CD4-positive, alpha-beta memory T cell (primary cell): ENCODE measurements at regions of chr13 and their contacts with region 1.

Region 1: GRCh38 chr13:99366075-99366987 is 59.1 kb upstream of the GPR183 start:
- DNase-seq: no peak
- H3K4me3 ChIP-seq: peak overlapping the region in 1 of 2 donors; percentile 22
- H3K4me3 Mint-ChIP-seq: peak overlapping the region; percentile 41 to 93 (median 78)
- H3K27ac ChIP-seq: peak overlapping the region; percentile 70
- H3K27ac Mint-ChIP-seq: peak overlapping the region; percentile 96 to 98 (median 97)
- H3K4me1 ChIP-seq: peaks cover 98% of the 10 kb centered on the region
- H3K4me1 Mint-ChIP-seq: peaks cover 73 to 98% (median 85%) of the 10 kb centered on the region in 4 donors
- H3K27me3 ChIP-seq: no peaks in the 10 kb centered on the region
- H3K27me3 Mint-ChIP-seq: no peaks in the 10 kb centered on the region

Region 2: GRCh38 chr13:99275093-99275469 is 91.2 kb before region 1 on chr13:
- CTCF ChIA-PET with region 1: interaction called, 67 read pairs
- POLR2A ChIA-PET with region 1: interaction called, 23 read pairs
- intact Hi-C with region 1: no loop called
- DNase-seq: peak; percentile 46 to 67 (median 54)
- H3K4me3 ChIP-seq: peak overlapping the region in 1 of 2 donors; percentile 3
- H3K4me3 Mint-ChIP-seq: peak overlapping the region in 7 of 8 donors; percentile 43 to 86 (median 74)
- H3K27ac ChIP-seq: peak overlapping the region; percentile 11
- H3K27ac Mint-ChIP-seq: peak overlapping the region; percentile 80 to 98 (median 94)
- H3K4me1 ChIP-seq: peaks cover 93% of the 10 kb centered on the region
- H3K4me1 Mint-ChIP-seq: peaks cover 79 to 99% (median 89%) of the 10 kb centered on the region in 4 donors
- H3K27me3 ChIP-seq: no peaks in the 10 kb centered on the region
- H3K27me3 Mint-ChIP-seq: no peaks in the 10 kb centered on the region

Region 3: DNA sequence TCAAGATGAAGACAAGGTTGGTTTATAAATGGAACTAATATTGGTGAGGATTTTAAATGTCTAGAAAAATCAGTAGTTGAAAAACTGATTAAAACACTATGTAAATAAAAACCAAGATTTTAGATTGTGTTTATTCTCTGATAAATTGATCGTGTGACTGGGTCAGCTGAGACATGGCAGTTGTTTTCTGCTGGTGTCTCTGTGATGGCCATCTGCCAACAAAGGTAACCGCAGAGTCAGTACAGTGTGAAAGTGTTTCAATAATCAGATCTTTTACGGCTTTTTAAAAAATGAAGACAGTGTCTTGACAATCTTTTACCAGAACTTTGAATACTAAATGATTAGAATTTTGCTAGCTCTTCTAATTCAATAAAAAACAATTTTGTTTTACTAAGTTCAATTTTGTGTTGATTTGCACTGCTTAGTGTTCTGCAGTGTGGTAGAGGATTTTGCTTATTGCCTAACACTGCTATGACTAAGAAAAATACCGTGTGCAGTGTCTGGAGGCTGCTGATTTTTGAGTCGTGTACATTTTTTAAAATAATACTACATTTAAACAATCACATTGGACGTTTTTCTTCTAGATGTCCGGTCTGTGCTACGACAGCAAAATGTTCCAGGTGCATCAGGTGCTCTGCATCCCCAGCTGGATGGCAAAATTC is 26.5 kb before region 1 on chr13:
- CTCF ChIA-PET with region 1: interaction called, 6 read pairs
- POLR2A ChIA-PET with region 1: interaction called, 38 read pairs
- intact Hi-C with region 1: no loop called
- DNase-seq: peak; percentile 71 to 86 (median 76)
- H3K4me3 ChIP-seq: peak overlapping the region; percentile 4 to 37
- H3K4me3 Mint-ChIP-seq: peak overlapping the region; percentile 68 to 91 (median 85)
- H3K27ac ChIP-seq: peak overlapping the region; percentile 47
- H3K27ac Mint-ChIP-seq: peak overlapping the region; percentile 76 to 94 (median 91)
- H3K4me1 ChIP-seq: peaks cover 86% of the 10 kb centered on the region
- H3K4me1 Mint-ChIP-seq: peaks cover 71 to 97% (median 83%) of the 10 kb centered on the region in 4 donors
- H3K27me3 ChIP-seq: no peaks in the 10 kb centered on the region
- H3K27me3 Mint-ChIP-seq: no peaks in the 10 kb centered on the region

Region 4: GRCh38 chr13:99347911-99348451 is 18.4 kb before region 1 on chr13:
- CTCF ChIA-PET with region 1: interaction called, 46 read pairs
- POLR2A ChIA-PET with region 1: interaction called, 160 read pairs
- intact Hi-C with region 1: loop called (anchors 1 kb)
- DNase-seq: no peak
- H3K4me3 ChIP-seq: no peak overlapping the region
- H3K4me3 Mint-ChIP-seq: peak overlapping the region in 5 of 8 donors; percentile 30 to 66 (median 56)
- H3K27ac ChIP-seq: peak overlapping the region; percentile 9
- H3K27ac Mint-ChIP-seq: peak overlapping the region; percentile 79 to 99 (median 94)
- H3K4me1 ChIP-seq: peaks cover 84% of the 10 kb centered on the region
- H3K4me1 Mint-ChIP-seq: peaks cover 79 to 98% (median 88%) of the 10 kb centered on the region in 4 donors
- H3K27me3 ChIP-seq: no peaks in the 10 kb centered on the region
- H3K27me3 Mint-ChIP-seq: no peaks in the 10 kb centered on the region